CD8-positive, alpha-beta T cell (primary cell): ENCODE measurements at regions of chr15 and their contacts with region 1.

Region 1: GRCh38 chr15:73991726-73992593 is at the start of gene STOML1:
- DNase-seq: peak; percentile 88 to 97 (median 96)
- ATAC-seq: peak; percentile 79
- H3K4me3 ChIP-seq: peak within 1 kb of the TSS; percentile 62 to 88
- H3K4me3 Mint-ChIP-seq: peak within 1 kb of the TSS; percentile 100
- H3K27ac ChIP-seq: peak within 1 kb of the TSS; percentile 53
- H3K27ac Mint-ChIP-seq: peak within 1 kb of the TSS; percentile 73
- H3K4me1 ChIP-seq: peaks cover 42% of the 10 kb centered on the region
- H3K4me1 Mint-ChIP-seq: peaks cover 48% of the 10 kb centered on the region
- H3K27me3 ChIP-seq: no peaks in the 10 kb centered on the region
- H3K27me3 Mint-ChIP-seq: no peaks in the 10 kb centered on the region
- CTCF ChIP-seq: peak; percentile 95
- total RNA-seq, gene STOML1: 2.5 to 4.8 TPM

Region 2: GRCh38 chr15:73927476-73928240 is 64.3 kb before region 1 on chr15:
- CTCF ChIA-PET with region 1: interaction called, 5 read pairs
- POLR2A ChIA-PET with region 1: interaction called, 6 read pairs
- intact Hi-C with region 1: loop called (anchors 1 to 2 kb)
- DNase-seq: peak; percentile 56 to 87 (median 77)
- ATAC-seq: peak; percentile 88
- H3K4me3 ChIP-seq: peak overlapping the region; percentile 49 to 79
- H3K4me3 Mint-ChIP-seq: peak overlapping the region; percentile 79
- H3K27ac ChIP-seq: peak overlapping the region in 1 of 2 experiments; percentile 41
- H3K27ac Mint-ChIP-seq: peak overlapping the region; percentile 20
- H3K4me1 ChIP-seq: peaks cover 27% of the 10 kb centered on the region
- H3K4me1 Mint-ChIP-seq: peaks cover 38% of the 10 kb centered on the region
- H3K27me3 ChIP-seq: no peaks in the 10 kb centered on the region
- H3K27me3 Mint-ChIP-seq: no peaks in the 10 kb centered on the region
- CTCF ChIP-seq: peak; percentile 83

Region 3: DNA sequence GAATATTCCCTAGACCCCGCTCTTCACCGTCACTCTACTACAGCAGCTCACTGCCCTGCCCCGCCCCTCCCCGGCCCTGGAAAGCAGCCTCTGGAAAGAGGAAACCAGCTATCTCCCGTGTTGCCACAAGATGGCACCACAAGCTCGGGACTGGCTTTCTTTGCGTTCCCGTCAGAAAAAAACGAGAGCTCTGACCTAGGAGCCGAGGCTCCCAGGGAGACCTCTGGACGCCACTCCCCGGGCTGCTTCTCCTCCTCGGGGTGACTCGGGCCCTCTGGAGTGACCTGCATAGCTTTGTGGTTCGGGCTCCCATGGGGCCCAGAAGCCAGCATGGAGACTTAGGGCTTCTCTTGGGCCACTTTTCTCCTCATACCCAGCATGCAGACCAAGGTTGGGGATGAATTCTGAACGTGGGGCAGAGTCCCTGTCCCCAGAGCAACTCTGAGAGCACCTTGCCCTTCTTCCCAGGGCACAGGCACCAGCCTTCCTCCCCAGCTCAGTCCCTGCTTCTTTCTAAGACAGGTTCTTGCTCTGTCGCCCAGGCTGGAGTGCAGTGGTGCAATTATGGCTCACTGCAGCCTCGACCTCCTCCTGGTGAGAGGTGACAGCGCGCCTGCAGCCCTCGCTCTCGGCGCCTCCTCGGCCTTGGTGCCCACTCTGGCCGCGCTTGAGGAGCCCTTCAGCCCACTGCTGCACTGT is 18.8 kb before region 1 on chr15:
- CTCF ChIA-PET with region 1: interaction called, 86 read pairs
- POLR2A ChIA-PET with region 1: interaction called, 5 read pairs
- intact Hi-C with region 1: loop called in 1 of 2 experiments (anchors 2 kb)
- DNase-seq: peak; percentile 58 to 86 (median 74)
- ATAC-seq: peak; percentile 83
- H3K4me3 ChIP-seq: peak overlapping the region in 1 of 2 experiments; percentile 24
- H3K4me3 Mint-ChIP-seq: peak overlapping the region; percentile 11
- H3K27ac ChIP-seq: no peak overlapping the region
- H3K27ac Mint-ChIP-seq: no peak overlapping the region
- H3K4me1 ChIP-seq: peaks cover 26% of the 10 kb centered on the region
- H3K4me1 Mint-ChIP-seq: peaks cover 26% of the 10 kb centered on the region
- H3K27me3 ChIP-seq: peaks cover 0 to 11% of the 10 kb centered on the region in 2 experiments
- H3K27me3 Mint-ChIP-seq: peaks cover 18% of the 10 kb centered on the region
- CTCF ChIP-seq: peak; percentile 68

Region 4: GRCh38 chr15:74044267-74045110 is 52.5 kb after region 1 on chr15:
- CTCF ChIA-PET with region 1: interaction called, 8 read pairs
- POLR2A ChIA-PET with region 1: interaction called, 3 read pairs
- intact Hi-C with region 1: loop called in 1 of 2 experiments (anchors 5 kb)
- DNase-seq: no peak
- ATAC-seq: no peak
- H3K4me3 ChIP-seq: no peak overlapping the region
- H3K4me3 Mint-ChIP-seq: no peak overlapping the region
- H3K27ac ChIP-seq: no peak overlapping the region
- H3K27ac Mint-ChIP-seq: no peak overlapping the region
- H3K4me1 ChIP-seq: peaks cover 10% of the 10 kb centered on the region
- H3K4me1 Mint-ChIP-seq: peaks cover 10% of the 10 kb centered on the region
- H3K27me3 ChIP-seq: no peaks in the 10 kb centered on the region
- H3K27me3 Mint-ChIP-seq: no peaks in the 10 kb centered on the region
- CTCF ChIP-seq: no peak

Region 5: DNA sequence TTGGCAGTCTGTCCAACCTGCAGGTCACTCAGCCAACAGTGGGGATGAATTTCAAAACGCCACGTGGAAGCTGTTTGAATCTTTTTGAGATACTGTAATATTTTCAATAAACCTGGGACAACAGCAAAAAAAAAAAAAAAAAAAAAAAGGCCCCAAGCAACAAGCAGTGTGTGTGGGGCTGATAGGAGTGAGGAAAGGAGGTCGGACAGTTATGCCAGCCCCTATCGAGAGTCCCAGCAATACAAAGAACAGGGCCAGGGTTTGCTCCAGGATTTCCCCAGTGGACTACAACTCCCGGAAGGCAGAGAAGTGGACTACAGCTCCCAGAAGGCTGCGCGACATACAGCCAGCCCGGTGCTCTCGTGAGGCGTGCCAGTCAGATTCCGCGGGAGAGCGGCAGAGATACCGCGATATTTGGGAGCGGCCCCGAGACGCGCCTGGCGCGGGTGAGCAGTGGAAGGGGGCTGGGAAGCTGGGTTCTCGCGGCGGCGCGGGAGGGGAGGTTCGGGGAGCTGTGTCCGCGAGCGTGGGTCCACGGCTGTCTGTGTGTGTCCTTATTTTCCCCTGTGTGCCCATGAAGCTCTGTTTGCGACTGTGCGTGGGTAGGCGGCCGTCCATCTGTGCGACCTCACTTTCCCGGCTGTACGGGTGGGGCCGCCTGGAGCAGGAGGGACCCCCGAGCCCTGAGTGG is 1031.4 kb after region 1 on chr15 and contains the start of gene PPCDC:
- CTCF ChIA-PET with region 1: no interaction called
- POLR2A ChIA-PET with region 1: interaction called, 3 read pairs
- intact Hi-C with region 1: loop called in 1 of 2 experiments (anchors 10 kb)
- DNase-seq: peak; percentile 81 to 96 (median 93)
- ATAC-seq: peak; percentile 100
- H3K4me3 ChIP-seq: peak within 1 kb of the TSS; percentile 82 to 93
- H3K4me3 Mint-ChIP-seq: peak within 1 kb of the TSS; percentile 92
- H3K27ac ChIP-seq: peak within 1 kb of the TSS; percentile 76 to 77
- H3K27ac Mint-ChIP-seq: peak within 1 kb of the TSS; percentile 92
- H3K4me1 ChIP-seq: peaks cover 8% of the 10 kb centered on the region
- H3K4me1 Mint-ChIP-seq: peaks cover 14% of the 10 kb centered on the region
- H3K27me3 ChIP-seq: no peaks in the 10 kb centered on the region
- H3K27me3 Mint-ChIP-seq: no peaks in the 10 kb centered on the region
- CTCF ChIP-seq: no peak
- total RNA-seq, gene PPCDC: 6.0 to 6.5 TPM